ENCODE measurements at regions of chr5 and their contacts with region 1.

Region 1: GRCh38 chr5:151157426-151158286 is at the start of gene ANXA6:
- DNase-seq: peak; percentile 48 to 79 (median 57)
- ATAC-seq: peak; percentile 92
- H3K4me3 ChIP-seq: peak within 1 kb of the TSS; percentile 85
- H3K4me3 Mint-ChIP-seq: peak within 1 kb of the TSS; percentile 94 to 99 (median 96)
- H3K27ac ChIP-seq: peak within 1 kb of the TSS; percentile 92
- H3K27ac Mint-ChIP-seq: peak within 1 kb of the TSS; percentile 90 to 99 (median 96)
- H3K4me1 ChIP-seq: peaks cover 36 to 44% of the 10 kb centered on the region in 2 donors
- H3K4me1 Mint-ChIP-seq: peaks cover 39 to 69% (median 57%) of the 10 kb centered on the region in 7 donors
- H3K27me3 ChIP-seq: no peaks in the 10 kb centered on the region
- H3K27me3 Mint-ChIP-seq: no peaks in the 10 kb centered on the region
- total RNA-seq, gene ANXA6: 212 to 512 (median 272) TPM

Region 2: DNA sequence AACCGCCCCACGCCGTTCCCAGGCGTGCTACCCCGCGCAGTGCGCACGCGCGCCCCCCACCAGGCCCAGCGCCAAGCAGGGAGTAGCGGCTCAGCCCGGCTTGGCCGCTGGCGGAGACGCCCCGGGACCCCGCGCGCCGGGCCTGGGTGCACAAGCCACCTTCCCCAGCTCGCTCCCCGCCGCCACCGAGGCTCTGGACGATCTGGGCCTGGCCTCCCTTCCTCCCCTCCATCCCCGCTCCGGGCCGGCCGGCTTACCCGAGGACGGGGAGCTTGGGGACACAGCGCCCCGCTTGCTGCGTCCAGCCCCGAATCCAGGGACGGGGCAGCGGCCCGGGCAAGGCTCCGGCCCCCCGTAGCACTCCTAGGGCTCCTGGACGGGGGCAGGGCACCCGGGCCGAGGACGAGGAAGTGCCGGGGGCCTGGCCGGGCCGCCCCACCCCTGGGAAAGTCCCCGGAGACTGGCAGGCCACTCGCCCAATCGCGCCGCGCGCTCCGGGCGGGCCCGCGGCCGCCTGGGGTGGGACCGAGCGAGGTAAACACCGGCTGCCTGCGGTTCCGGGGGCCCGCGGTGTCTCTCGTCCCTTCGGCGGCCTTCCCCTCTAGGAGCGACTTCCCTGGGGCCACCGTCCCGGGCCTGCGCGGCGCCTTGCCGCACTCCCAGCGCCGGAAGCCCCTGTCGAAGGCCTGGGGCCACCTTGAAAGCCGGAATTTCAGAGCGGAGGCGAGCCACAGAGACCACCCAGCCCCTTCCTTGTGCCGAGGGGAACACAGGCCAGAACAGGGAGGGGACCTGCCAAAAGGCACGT is 76.8 kb before region 1 on chr5 and contains the start of gene TNIP1:
- CTCF ChIA-PET with region 1: no interaction called
- POLR2A ChIA-PET with region 1: no interaction called
- intact Hi-C with region 1: loop called in 1 of 2 experiments (anchors 1 kb)
- DNase-seq: peak; percentile 86 to 99 (median 90)
- ATAC-seq: peak; percentile 94
- H3K4me3 ChIP-seq: peak within 1 kb of the TSS; percentile 86
- H3K4me3 Mint-ChIP-seq: peak within 1 kb of the TSS; percentile 85 to 95 (median 90)
- H3K27ac ChIP-seq: peak within 1 kb of the TSS; percentile 96
- H3K27ac Mint-ChIP-seq: peak within 1 kb of the TSS; percentile 86 to 95 (median 91)
- H3K4me1 ChIP-seq: peaks cover 37 to 69% of the 10 kb centered on the region in 2 donors
- H3K4me1 Mint-ChIP-seq: peaks cover 53 to 84% (median 73%) of the 10 kb centered on the region in 7 donors
- H3K27me3 ChIP-seq: no peaks in the 10 kb centered on the region
- H3K27me3 Mint-ChIP-seq: no peaks in the 10 kb centered on the region
- total RNA-seq, gene TNIP1: 124 to 234 (median 131) TPM

Region 3: GRCh38 chr5:151126199-151126645 is 31.4 kb before region 1 on chr5:
- CTCF ChIA-PET with region 1: interaction called, 403 read pairs
- POLR2A ChIA-PET with region 1: interaction called, 760 read pairs
- intact Hi-C with region 1: loop called in 1 of 2 experiments (anchors 1 kb)
- DNase-seq: peak; percentile 41 to 71 (median 64)
- ATAC-seq: peak; percentile 73
- H3K4me3 ChIP-seq: no peak overlapping the region
- H3K4me3 Mint-ChIP-seq: peak overlapping the region in 9 of 10 donors; percentile 22 to 84 (median 54)
- H3K27ac ChIP-seq: peak overlapping the region; percentile 72
- H3K27ac Mint-ChIP-seq: peak overlapping the region; percentile 68 to 99 (median 91)
- H3K4me1 ChIP-seq: peaks cover under 1 to 27% of the 10 kb centered on the region in 2 donors
- H3K4me1 Mint-ChIP-seq: peaks cover 32 to 75% (median 57%) of the 10 kb centered on the region in 7 donors
- H3K27me3 ChIP-seq: no peaks in the 10 kb centered on the region
- H3K27me3 Mint-ChIP-seq: no peaks in the 10 kb centered on the region

Region 4: DNA sequence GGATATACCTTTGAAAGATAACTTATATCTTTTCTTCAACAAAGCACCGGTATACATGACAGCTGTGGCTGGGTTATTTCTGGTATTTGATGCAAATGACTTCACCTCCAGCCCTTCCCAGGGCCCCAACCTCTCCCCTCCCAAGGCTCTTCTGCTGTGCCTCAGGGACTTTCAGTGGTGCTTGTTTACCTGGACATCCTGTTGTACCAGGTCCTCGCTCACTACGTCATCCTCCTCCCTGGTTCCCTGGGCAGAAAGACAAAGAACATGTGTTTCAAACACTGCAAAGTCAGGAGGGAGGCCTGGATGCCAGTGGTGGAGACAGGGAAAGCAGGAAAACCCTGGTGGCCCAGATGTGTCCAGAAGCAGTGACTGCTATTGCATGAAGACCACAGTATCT is 23.4 kb before region 1 on chr5:
- CTCF ChIA-PET with region 1: interaction called, 403 read pairs
- POLR2A ChIA-PET with region 1: interaction called, 760 read pairs
- intact Hi-C with region 1: loop called in 1 of 2 experiments (anchors 1 kb)
- DNase-seq: no peak
- ATAC-seq: no peak
- H3K4me3 ChIP-seq: no peak overlapping the region
- H3K4me3 Mint-ChIP-seq: no peak overlapping the region
- H3K27ac ChIP-seq: peak overlapping the region; percentile 37
- H3K27ac Mint-ChIP-seq: peak overlapping the region in 8 of 9 donors; percentile 53 to 99 (median 84)
- H3K4me1 ChIP-seq: peaks cover 21 to 50% of the 10 kb centered on the region in 2 donors
- H3K4me1 Mint-ChIP-seq: peaks cover 65 to 98% (median 85%) of the 10 kb centered on the region in 7 donors
- H3K27me3 ChIP-seq: no peaks in the 10 kb centered on the region
- H3K27me3 Mint-ChIP-seq: no peaks in the 10 kb centered on the region

Region 5: DNA sequence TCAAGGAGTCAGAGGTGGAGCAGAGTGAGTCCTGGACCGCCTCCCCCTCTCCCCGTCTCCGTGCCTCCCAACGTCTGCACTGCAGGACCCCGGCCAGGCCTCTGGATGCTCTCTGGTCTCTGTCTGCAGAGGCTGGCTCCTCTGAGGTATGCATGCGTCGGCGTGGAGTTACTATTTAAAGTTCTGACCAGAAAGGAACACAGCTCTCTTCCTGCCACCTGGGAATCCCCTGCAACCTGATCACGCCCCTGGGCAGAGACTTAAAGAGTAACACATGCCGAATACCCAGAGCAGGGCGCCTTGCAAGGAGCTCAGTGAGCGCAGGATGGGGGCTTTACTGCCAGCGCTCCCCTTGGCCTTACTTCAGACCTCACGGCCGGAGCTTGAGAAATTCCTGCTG is 16.1 kb before region 1 on chr5:
- CTCF ChIA-PET with region 1: interaction called, 31 read pairs
- POLR2A ChIA-PET with region 1: interaction called, 760 read pairs
- intact Hi-C with region 1: loop called (anchors 1 to 2 kb)
- DNase-seq: peak in 7 of 9 donors; percentile 39 to 62 (median 53)
- ATAC-seq: peak; percentile 80
- H3K4me3 ChIP-seq: peak overlapping the region; percentile 44
- H3K4me3 Mint-ChIP-seq: peak overlapping the region; percentile 68 to 96 (median 88)
- H3K27ac ChIP-seq: peak overlapping the region; percentile 67
- H3K27ac Mint-ChIP-seq: peak overlapping the region; percentile 81 to 99 (median 92)
- H3K4me1 ChIP-seq: peaks cover 85 to 88% of the 10 kb centered on the region in 2 donors
- H3K4me1 Mint-ChIP-seq: peaks cover 84 to 100% (median 96%) of the 10 kb centered on the region in 7 donors
- H3K27me3 ChIP-seq: no peaks in the 10 kb centered on the region
- H3K27me3 Mint-ChIP-seq: no peaks in the 10 kb centered on the region

Region 6: GRCh38 chr5:151758430-151759241 is 601.0 kb after region 1 on chr5 and contains the start of gene ATOX1:
- CTCF ChIA-PET with region 1: no interaction called
- POLR2A ChIA-PET with region 1: no interaction called
- intact Hi-C with region 1: loop called in 1 of 2 experiments (anchors 5 kb)
- DNase-seq: peak; percentile 85 to 93 (median 89)
- ATAC-seq: peak; percentile 100
- H3K4me3 ChIP-seq: peak within 1 kb of the TSS; percentile 94
- H3K4me3 Mint-ChIP-seq: peak within 1 kb of the TSS; percentile 88 to 99 (median 94)
- H3K27ac ChIP-seq: peak within 1 kb of the TSS; percentile 94
- H3K27ac Mint-ChIP-seq: peak within 1 kb of the TSS; percentile 88 to 98 (median 94)
- H3K4me1 ChIP-seq: peaks cover 14 to 20% of the 10 kb centered on the region in 2 donors
- H3K4me1 Mint-ChIP-seq: peaks cover 16 to 50% (median 39%) of the 10 kb centered on the region in 7 donors
- H3K27me3 ChIP-seq: no peaks in the 10 kb centered on the region
- H3K27me3 Mint-ChIP-seq: peaks cover 0 to 3% (median 0%) of the 10 kb centered on the region in 5 donors
- total RNA-seq, gene ATOX1: 14.8 to 58.2 (median 29.6) TPM